ENCODE measurements at regions of chr19 and their contacts with region 1.

Region 1: GRCh38 chr19:4791170-4792018 is at the start of gene FEM1A:
- DNase-seq: peak; percentile 99
- ATAC-seq: peak; percentile 97
- H3K4me3 Mint-ChIP-seq: peak within 1 kb of the TSS; percentile 84
- H3K27ac Mint-ChIP-seq: peak within 1 kb of the TSS; percentile 85
- H3K4me1 Mint-ChIP-seq: peaks cover 40% of the 10 kb centered on the region
- H3K27me3 Mint-ChIP-seq: no peaks in the 10 kb centered on the region
- total RNA-seq, gene FEM1A: 9.2 to 10.6 TPM

Region 2: GRCh38 chr19:3434712-3435553 is 1356.5 kb before region 1 on chr19:
- CTCF ChIA-PET with region 1: no interaction called
- POLR2A ChIA-PET with region 1: no interaction called
- intact Hi-C with region 1: loop called in 1 of 2 experiments (anchors 2 kb)
- DNase-seq: peak; percentile 98
- ATAC-seq: peak; percentile 96
- H3K4me3 Mint-ChIP-seq: peak overlapping the region; percentile 84
- H3K27ac Mint-ChIP-seq: peak overlapping the region; percentile 99
- H3K4me1 Mint-ChIP-seq: peaks cover 13% of the 10 kb centered on the region
- H3K27me3 Mint-ChIP-seq: no peaks in the 10 kb centered on the region

Region 3: DNA sequence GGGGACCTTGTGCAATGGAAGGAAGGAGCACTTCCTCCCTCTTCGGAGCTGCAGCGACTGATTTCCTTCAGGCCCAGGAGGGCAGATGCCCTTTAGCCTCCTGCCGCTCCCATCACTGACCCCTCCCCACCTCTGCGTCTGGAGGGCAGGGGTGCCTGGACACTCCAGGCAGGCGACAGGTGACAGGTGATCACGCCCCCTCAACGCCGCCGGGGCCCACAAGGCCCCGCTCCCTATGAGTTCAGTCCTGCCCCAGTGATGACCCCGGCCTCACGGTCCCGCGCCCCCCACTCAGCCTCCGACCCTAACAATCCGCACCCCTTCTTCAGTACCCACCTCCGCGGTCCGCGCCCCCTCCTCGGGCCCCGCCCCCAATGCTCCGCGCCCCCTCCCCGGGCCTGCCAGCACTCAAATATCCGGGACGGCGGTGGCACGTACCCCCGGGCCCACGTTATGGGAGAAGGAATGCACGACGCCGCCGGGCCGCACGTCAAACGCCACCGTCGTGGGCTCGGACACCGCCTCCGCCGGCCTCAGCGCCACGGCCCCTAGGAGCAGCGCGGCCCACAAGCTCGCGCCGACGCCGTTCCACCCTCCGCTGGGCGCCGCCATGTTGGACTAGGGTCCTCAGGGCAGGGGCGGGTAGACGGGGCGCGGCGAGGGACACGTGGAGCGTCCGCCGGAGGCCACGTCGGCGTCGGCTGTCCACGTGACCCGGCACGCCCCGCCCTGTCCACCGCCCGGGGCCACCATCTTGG is 121.5 kb before region 1 on chr19 and contains the start of gene MYDGF:
- CTCF ChIA-PET with region 1: no interaction called
- POLR2A ChIA-PET with region 1: no interaction called
- intact Hi-C with region 1: loop called in 1 of 2 experiments (anchors 1 kb)
- DNase-seq: peak; percentile 97
- ATAC-seq: peak; percentile 99
- H3K4me3 Mint-ChIP-seq: peak within 1 kb of the TSS; percentile 85
- H3K27ac Mint-ChIP-seq: peak within 1 kb of the TSS; percentile 75
- H3K4me1 Mint-ChIP-seq: peaks cover 18% of the 10 kb centered on the region
- H3K27me3 Mint-ChIP-seq: no peaks in the 10 kb centered on the region
- total RNA-seq, gene MYDGF: 34.7 to 53.8 TPM

Region 4: GRCh38 chr19:4768934-4769777 is 22.2 kb before region 1 on chr19:
- CTCF ChIA-PET with region 1: interaction called, 18 read pairs
- POLR2A ChIA-PET with region 1: interaction called, 5 read pairs
- intact Hi-C with region 1: loop called in 1 of 2 experiments (anchors 1 kb)
- DNase-seq: peak; percentile 92
- ATAC-seq: peak; percentile 85
- H3K4me3 Mint-ChIP-seq: no peak overlapping the region
- H3K27ac Mint-ChIP-seq: no peak overlapping the region
- H3K4me1 Mint-ChIP-seq: no peaks in the 10 kb centered on the region
- H3K27me3 Mint-ChIP-seq: peaks cover 11% of the 10 kb centered on the region

Region 5: DNA sequence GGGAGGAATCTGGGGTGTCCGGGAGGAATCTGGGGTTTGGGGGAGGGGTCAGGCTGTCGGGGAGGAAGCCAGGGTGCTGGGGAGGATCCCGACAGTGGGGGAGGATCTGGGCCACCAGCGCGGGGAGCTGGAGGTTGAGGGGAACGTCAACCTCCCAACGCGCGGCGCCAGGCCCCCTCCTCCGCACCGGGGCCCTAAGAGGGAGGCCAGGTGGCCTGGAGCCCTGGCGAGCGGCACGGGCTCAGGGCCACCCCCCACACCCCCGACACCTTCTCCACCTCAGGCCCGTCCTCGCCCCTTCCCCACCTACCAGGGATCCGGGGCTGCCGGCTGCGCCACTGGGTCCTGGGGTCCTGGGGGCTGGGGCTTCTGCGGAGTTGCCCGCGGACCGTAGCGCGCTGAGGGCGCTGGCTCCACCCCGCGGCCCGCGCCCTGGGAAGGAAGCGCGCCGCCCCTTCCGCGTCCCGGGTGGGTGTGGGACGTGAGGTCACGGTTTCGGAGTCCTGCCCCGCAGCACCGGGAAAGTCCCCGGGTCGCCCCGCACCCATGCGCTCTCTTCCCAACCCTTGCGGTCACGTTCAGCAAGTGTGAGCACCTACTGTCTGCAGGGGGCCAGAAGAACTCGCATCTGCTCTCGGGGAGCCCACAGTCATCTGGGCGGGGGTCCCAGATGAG is 40.0 kb after region 1 on chr19 and contains the start of gene TICAM1:
- CTCF ChIA-PET with region 1: interaction called, 10 read pairs
- POLR2A ChIA-PET with region 1: interaction called, 5 read pairs
- intact Hi-C with region 1: no loop called
- DNase-seq: peak; percentile 87
- ATAC-seq: peak; percentile 91
- H3K4me3 Mint-ChIP-seq: peak within 1 kb of the TSS; percentile 85
- H3K27ac Mint-ChIP-seq: peak within 1 kb of the TSS; percentile 87
- H3K4me1 Mint-ChIP-seq: peaks cover 22% of the 10 kb centered on the region
- H3K27me3 Mint-ChIP-seq: no peaks in the 10 kb centered on the region
- total RNA-seq, gene TICAM1: 23.4 to 24.1 TPM

Region 6: GRCh38 chr19:4968462-4969291 is 177.3 kb after region 1 on chr19 and contains the start of gene KDM4B:
- CTCF ChIA-PET with region 1: interaction called, 3 read pairs
- POLR2A ChIA-PET with region 1: interaction called, 7 read pairs
- intact Hi-C with region 1: loop called (anchors 1 to 2 kb)
- DNase-seq: peak; percentile 100
- ATAC-seq: peak; percentile 96
- H3K4me3 Mint-ChIP-seq: peak within 1 kb of the TSS; percentile 91
- H3K27ac Mint-ChIP-seq: peak within 1 kb of the TSS; percentile 90
- H3K4me1 Mint-ChIP-seq: peaks cover 30% of the 10 kb centered on the region
- H3K27me3 Mint-ChIP-seq: no peaks in the 10 kb centered on the region
- total RNA-seq, gene KDM4B: 33.9 to 35.8 TPM